Heart right ventricle (tissue), 16 donors: ENCODE measurements at regions of chr11 and their contacts with region 1.

Region 1: GRCh38 chr11:58286249-58286648 is 18.2 kb upstream of the OR10W1 start:
- DNase-seq: no peak
- ATAC-seq: peak in 6 of 8 donors; percentile 57 to 78 (median 70)
- H3K4me3 ChIP-seq: no peak overlapping the region
- H3K27ac ChIP-seq: no peak overlapping the region
- H3K4me1 ChIP-seq: peaks cover 0 to 8% (median 0%) of the 10 kb centered on the region in 9 donors
- H3K27me3 ChIP-seq: no peaks in the 10 kb centered on the region
- CTCF ChIP-seq: peak; percentile 24 to 69 (median 59)

Region 2: DNA sequence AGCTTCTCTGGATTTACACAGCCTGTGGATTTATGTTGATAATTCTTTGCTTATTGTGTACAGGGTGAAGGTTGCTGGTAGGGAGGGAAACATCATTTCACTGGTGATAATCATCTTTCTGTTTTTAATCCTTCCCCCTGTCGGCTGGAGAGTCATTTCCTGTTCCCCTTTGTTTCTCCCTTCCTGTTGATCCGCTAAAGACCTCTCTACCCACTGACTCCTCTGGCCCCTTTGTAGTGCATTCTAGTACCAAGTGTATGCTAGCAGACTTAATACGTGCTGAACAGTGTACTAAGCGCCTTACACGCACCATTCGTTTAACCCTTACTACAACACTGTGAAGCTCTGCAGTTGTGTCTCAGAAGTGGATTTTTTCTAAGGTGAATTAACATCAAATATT is 281.6 kb before region 1 on chr11:
- intact Hi-C with region 1: loop called in 1 of 10 experiments (anchors 5 kb)
- DNase-seq: peak in 1 of 2 donors; percentile 39
- ATAC-seq: peak; percentile 81 to 94 (median 90)
- H3K4me3 ChIP-seq: no peak overlapping the region
- H3K27ac ChIP-seq: peak overlapping the region in 9 of 10 donors; percentile 7 to 89 (median 69)
- H3K4me1 ChIP-seq: peaks cover 0 to 36% (median 0%) of the 10 kb centered on the region in 9 donors
- H3K27me3 ChIP-seq: no peaks in the 10 kb centered on the region
- CTCF ChIP-seq: no peak

Region 3: GRCh38 chr11:58186938-58187337 is 99.3 kb before region 1 on chr11:
- intact Hi-C with region 1: loop called in 2 of 10 experiments (anchors 5 to 10 kb)
- DNase-seq: peak in 1 of 2 donors; percentile 36
- ATAC-seq: peak; percentile 47 to 89 (median 84)
- H3K4me3 ChIP-seq: no peak overlapping the region
- H3K27ac ChIP-seq: peak overlapping the region in 3 of 10 donors; percentile 17 to 56 (median 52)
- H3K4me1 ChIP-seq: peaks cover 0 to 14% (median 0%) of the 10 kb centered on the region in 9 donors
- H3K27me3 ChIP-seq: no peaks in the 10 kb centered on the region
- CTCF ChIP-seq: peak in 2 of 9 donors; percentile 15 to 33

Region 4: GRCh38 chr11:58354727-58355126 is 68.5 kb after region 1 on chr11:
- intact Hi-C with region 1: no loop called
- DNase-seq: no peak
- ATAC-seq: no peak
- H3K4me3 ChIP-seq: no peak overlapping the region
- H3K27ac ChIP-seq: no peak overlapping the region
- H3K4me1 ChIP-seq: no peaks in the 10 kb centered on the region
- H3K27me3 ChIP-seq: no peaks in the 10 kb centered on the region
- CTCF ChIP-seq: no peak

Region 5: DNA sequence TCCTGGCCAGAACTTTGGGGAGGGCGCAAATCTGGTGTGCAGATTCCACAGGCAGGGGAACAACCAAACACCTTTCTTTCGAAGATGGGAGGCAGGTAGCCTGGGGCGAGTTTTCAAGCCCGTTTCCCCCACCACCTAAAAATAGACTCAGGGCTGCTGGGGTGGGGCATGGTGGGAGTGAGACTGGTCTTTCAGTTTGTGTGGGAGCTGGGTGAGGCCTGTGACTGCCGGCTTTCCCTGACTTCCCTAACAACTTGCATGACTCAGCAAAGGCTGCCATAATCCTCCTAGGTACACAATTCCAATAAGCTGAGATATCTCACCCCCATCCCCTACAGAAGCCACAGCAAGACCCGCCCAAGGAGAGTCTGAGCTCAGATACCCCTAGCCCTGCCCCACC is 160.0 kb after region 1 on chr11:
- intact Hi-C with region 1: no loop called
- DNase-seq: no peak
- ATAC-seq: no peak
- H3K4me3 ChIP-seq: no peak overlapping the region
- H3K27ac ChIP-seq: no peak overlapping the region
- H3K4me1 ChIP-seq: no peaks in the 10 kb centered on the region
- H3K27me3 ChIP-seq: no peaks in the 10 kb centered on the region
- CTCF ChIP-seq: no peak